Calu3 (cell line): ENCODE measurements at regions of chr10 and their contacts with region 1.

Region 1: DNA sequence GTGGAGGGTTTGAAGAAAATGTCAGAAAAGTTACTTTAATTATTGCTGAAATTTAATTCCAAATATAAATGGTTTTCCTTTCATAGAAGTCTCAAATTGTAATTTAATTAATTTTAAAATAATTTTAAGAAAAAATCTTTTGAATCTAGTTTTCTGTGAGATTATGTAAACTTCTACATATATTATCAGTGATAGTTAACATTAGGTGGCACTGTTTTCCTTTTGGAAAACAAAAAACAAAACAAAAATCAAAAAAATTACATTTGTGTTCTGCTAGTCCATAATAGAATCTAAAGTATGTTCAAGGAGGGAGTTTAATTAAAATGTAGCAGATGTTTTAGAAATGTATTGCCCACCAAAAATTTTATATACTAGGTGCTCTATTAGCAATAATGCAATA is 1456.7 kb downstream of the REEP3 start:
- DNase-seq: no peak
- H3K4me3 Mint-ChIP-seq: no peak overlapping the region
- H3K27ac Mint-ChIP-seq: no peak overlapping the region
- H3K4me1 Mint-ChIP-seq: no peaks in the 10 kb centered on the region
- H3K27me3 Mint-ChIP-seq: no peaks in the 10 kb centered on the region
- CTCF ChIP-seq: no peak

Region 2: GRCh38 chr10:64091897-64092296 is 886.0 kb before region 1 on chr10:
- CTCF ChIA-PET with region 1: interaction called, 4 read pairs
- intact Hi-C with region 1: loop called (anchors 10 kb)
- DNase-seq: peak; percentile 41
- H3K4me3 Mint-ChIP-seq: no peak overlapping the region
- H3K27ac Mint-ChIP-seq: no peak overlapping the region
- H3K4me1 Mint-ChIP-seq: peaks cover 8% of the 10 kb centered on the region
- H3K27me3 Mint-ChIP-seq: no peaks in the 10 kb centered on the region
- CTCF ChIP-seq: peak; percentile 48